ENCODE measurements at regions of chr22 and their contacts with region 1.

Region 1: GRCh38 chr22:44684506-44685383 is 17.3 kb upstream of the PRR5 start:
- DNase-seq: peak; percentile 85 to 92
- H3K4me3 ChIP-seq: no peak overlapping the region
- H3K27ac ChIP-seq: no peak overlapping the region
- H3K4me1 ChIP-seq: peaks cover 0 to 10% (median 5%) of the 10 kb centered on the region in 4 experiments; a peak in 5 of 7 replicates
- H3K27me3 ChIP-seq: no peaks in the 10 kb centered on the region; a peak in 1 of 7 replicates
- CTCF ChIP-seq: peak; percentile 98 to 100 (median 99)
- EP300 ChIP-seq: peak in 1 of 2 experiments; percentile 71; a peak in 1 of 3 replicates
- POLR2A ChIP-seq: no peak
- RAD21 ChIP-seq: peak; percentile 60 to 71

Region 2: GRCh38 chr22:44650806-44651205 is 33.9 kb before region 1 on chr22:
- CTCF ChIA-PET with region 1: no interaction called
- POLR2A ChIA-PET with region 1: no interaction called
- DNase-seq: no peak
- H3K4me3 ChIP-seq: no peak overlapping the region
- H3K27ac ChIP-seq: no peak overlapping the region
- H3K4me1 ChIP-seq: no peaks in the 10 kb centered on the region
- H3K27me3 ChIP-seq: no peaks in the 10 kb centered on the region; a peak in 2 of 7 replicates
- CTCF ChIP-seq: no peak
- EP300 ChIP-seq: no peak
- POLR2A ChIP-seq: no peak
- RAD21 ChIP-seq: no peak

Region 3: DNA sequence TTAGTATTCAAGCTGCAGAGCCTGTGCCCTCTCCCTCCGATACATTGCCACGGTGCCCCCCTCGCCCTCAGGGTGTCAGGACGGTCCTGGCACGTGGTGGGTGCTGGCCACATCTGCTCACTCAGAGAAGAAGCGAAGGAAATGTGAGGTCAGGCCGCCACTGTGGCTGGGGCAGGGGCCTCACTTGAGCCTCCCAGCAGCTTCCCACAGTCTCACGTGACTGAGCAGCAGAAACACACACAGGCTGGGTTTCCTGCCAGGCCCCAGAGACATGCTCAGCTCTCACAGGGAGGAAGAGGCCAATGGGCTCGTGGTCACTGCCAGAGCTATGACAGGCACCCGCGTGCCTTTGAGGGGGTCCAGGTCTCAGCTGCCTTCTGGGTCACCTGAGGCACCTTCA is 20.6 kb before region 1 on chr22:
- CTCF ChIA-PET with region 1: interaction called, 24 read pairs
- POLR2A ChIA-PET with region 1: no interaction called
- DNase-seq: no peak
- H3K4me3 ChIP-seq: no peak overlapping the region
- H3K27ac ChIP-seq: no peak overlapping the region
- H3K4me1 ChIP-seq: peaks cover 4 to 13% (median 9%) of the 10 kb centered on the region in 4 experiments
- H3K27me3 ChIP-seq: peaks cover 0 to 8% (median 7%) of the 10 kb centered on the region in 4 experiments; a peak in 5 of 7 replicates
- CTCF ChIP-seq: no peak
- EP300 ChIP-seq: no peak
- POLR2A ChIP-seq: no peak
- RAD21 ChIP-seq: no peak

Region 4: GRCh38 chr22:44669561-44669976 is 15.2 kb before region 1 on chr22:
- CTCF ChIA-PET with region 1: interaction called, 24 read pairs
- POLR2A ChIA-PET with region 1: no interaction called
- DNase-seq: peak in 1 of 2 experiments; percentile 70
- H3K4me3 ChIP-seq: peak overlapping the region in 1 of 4 experiments; percentile 64; a peak in 1 of 8 replicates
- H3K27ac ChIP-seq: no peak overlapping the region
- H3K4me1 ChIP-seq: peaks cover 0 to 5% (median 1%) of the 10 kb centered on the region in 4 experiments; a peak in 4 of 7 replicates
- H3K27me3 ChIP-seq: peaks cover 0 to 16% (median 10%) of the 10 kb centered on the region in 4 experiments; a peak in 6 of 7 replicates
- CTCF ChIP-seq: peak; percentile 74 to 87 (median 85)
- EP300 ChIP-seq: no peak
- POLR2A ChIP-seq: no peak
- RAD21 ChIP-seq: peak; percentile 67 to 72

Region 5: GRCh38 chr22:44697423-44698141 is 12.8 kb after region 1 on chr22:
- CTCF ChIA-PET with region 1: interaction called, 16 read pairs
- POLR2A ChIA-PET with region 1: no interaction called
- DNase-seq: peak; percentile 75 to 98
- H3K4me3 ChIP-seq: no peak overlapping the region
- H3K27ac ChIP-seq: no peak overlapping the region
- H3K4me1 ChIP-seq: peaks cover 0 to 16% (median 10%) of the 10 kb centered on the region in 4 experiments; a peak in 6 of 7 replicates
- H3K27me3 ChIP-seq: peaks cover 0 to 13% (median 9%) of the 10 kb centered on the region in 4 experiments; a peak in 6 of 7 replicates
- CTCF ChIP-seq: peak; percentile 97 to 98 (median 98)
- EP300 ChIP-seq: no peak
- POLR2A ChIP-seq: no peak
- RAD21 ChIP-seq: peak; percentile 92 to 96